Mammary epithelial cell (primary cell): ENCODE measurements at regions of chr9 and their contacts with region 1.

Region 1: GRCh38 chr9:97803167-97804058 is 49.6 kb upstream of the FOXE1 start:
- DNase-seq: peak; percentile 67
- H3K4me3 ChIP-seq: peak overlapping the region; percentile 35 to 57 (median 52)
- H3K27ac ChIP-seq: peak overlapping the region; percentile 27
- H3K4me1 ChIP-seq: peaks cover 49% of the 10 kb centered on the region
- H3K27me3 ChIP-seq: no peaks in the 10 kb centered on the region
- CTCF ChIP-seq: no peak

Region 2: DNA sequence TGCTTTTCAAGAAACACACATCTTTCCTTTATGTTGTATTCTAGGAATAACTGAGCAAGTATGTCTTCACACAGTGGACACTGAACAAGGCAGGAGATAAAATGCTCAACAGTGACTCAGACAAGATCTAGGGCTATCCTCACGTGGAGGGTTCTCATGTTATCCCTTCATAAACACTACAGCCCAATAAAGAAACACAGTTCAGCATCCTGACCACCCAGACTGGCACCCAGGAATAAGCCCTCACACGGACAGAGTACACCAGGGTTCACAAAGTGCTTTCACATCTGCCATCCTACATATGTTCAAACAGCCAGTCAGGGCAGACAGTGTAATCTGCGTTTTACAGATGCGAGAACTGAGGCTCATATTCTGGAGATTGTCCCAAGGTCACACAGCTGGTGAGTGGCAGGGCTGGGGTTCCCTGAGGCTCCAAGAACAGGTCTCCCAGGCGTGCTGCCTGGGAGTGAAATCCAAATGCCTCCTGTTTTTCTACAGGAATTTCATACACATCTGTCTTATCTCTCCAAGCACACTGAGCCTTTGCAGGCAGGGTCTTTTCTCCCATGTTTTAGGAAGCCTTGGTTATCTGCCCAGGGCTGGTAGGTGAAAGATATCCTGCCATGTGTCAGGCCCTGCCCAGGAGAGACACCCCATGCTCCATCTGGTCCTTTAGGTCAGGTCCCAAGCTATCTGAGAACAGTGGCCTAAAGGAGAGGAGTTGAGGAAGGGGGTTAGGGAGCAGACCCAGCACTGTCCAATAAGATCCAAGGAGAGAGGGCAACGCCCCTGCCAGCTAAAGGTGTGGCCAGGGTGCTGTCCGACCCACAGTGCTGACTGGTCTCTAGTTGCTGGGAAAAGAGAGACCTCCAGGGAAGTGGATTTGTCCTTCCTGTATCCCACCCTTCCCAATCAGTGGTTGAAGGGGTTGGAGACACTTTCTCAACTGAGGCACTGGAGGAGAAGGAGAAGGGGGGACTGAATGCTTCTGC is 58.4 kb before region 1 on chr9:
- CTCF ChIA-PET with region 1: no interaction called
- dilution Hi-C with region 1: loop called (anchors 5 kb)
- in situ Hi-C with region 1: no loop called
- intact Hi-C with region 1: no loop called
- DNase-seq: no peak
- H3K4me3 ChIP-seq: no peak overlapping the region
- H3K27ac ChIP-seq: no peak overlapping the region
- H3K4me1 ChIP-seq: peaks cover 11% of the 10 kb centered on the region
- H3K27me3 ChIP-seq: peaks cover 4% of the 10 kb centered on the region
- CTCF ChIP-seq: no peak

Region 3: DNA sequence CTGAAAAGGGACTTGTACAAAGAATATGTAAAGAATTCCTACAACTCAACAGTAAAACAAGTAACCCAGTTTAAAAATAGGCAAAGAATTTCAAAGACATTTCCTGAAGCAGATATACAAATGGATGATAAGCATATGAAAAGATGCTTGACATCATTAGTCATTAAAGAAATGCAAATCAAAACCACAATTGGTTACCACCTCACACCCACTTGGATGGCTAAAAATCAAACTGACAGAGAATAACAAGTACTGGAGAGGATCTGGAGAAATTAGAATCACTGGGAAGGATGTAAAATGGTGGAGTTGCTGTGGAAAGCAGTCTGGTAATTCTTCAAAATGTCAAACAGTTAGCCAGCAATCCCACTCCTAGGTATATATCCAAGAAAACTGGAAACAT is 37.1 kb after region 1 on chr9:
- CTCF ChIA-PET with region 1: no interaction called
- dilution Hi-C with region 1: no loop called
- in situ Hi-C with region 1: no loop called
- intact Hi-C with region 1: loop called (anchors 5 kb)
- DNase-seq: peak; percentile 41
- H3K4me3 ChIP-seq: no peak overlapping the region
- H3K27ac ChIP-seq: no peak overlapping the region
- H3K4me1 ChIP-seq: peaks cover 10% of the 10 kb centered on the region
- H3K27me3 ChIP-seq: no peaks in the 10 kb centered on the region
- CTCF ChIP-seq: no peak

Region 4: DNA sequence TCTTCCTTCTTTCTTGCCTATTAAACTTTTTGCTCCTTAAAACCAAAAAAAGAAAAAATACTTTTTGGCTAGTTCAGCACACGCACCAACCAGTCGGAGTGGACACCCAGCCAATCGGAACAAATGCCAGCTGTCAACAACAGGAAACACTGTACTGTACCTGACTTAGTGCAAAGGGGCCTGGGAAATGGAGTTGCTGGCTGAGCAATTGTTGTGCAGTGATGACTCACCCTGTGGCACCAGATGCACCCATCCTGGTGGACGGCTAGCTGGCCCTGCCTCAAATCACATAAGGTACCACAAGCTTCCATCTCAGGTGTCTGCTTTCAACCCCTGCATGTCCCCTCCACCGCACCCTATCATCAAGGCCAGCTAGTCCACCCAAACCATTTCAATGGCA is 70.5 kb after region 1 on chr9:
- CTCF ChIA-PET with region 1: no interaction called
- dilution Hi-C with region 1: no loop called
- in situ Hi-C with region 1: no loop called
- intact Hi-C with region 1: loop called (anchors 2 kb)
- DNase-seq: peak; percentile 52
- H3K4me3 ChIP-seq: no peak overlapping the region
- H3K27ac ChIP-seq: no peak overlapping the region
- H3K4me1 ChIP-seq: peaks cover 37% of the 10 kb centered on the region
- H3K27me3 ChIP-seq: no peaks in the 10 kb centered on the region
- CTCF ChIP-seq: no peak

Region 5: DNA sequence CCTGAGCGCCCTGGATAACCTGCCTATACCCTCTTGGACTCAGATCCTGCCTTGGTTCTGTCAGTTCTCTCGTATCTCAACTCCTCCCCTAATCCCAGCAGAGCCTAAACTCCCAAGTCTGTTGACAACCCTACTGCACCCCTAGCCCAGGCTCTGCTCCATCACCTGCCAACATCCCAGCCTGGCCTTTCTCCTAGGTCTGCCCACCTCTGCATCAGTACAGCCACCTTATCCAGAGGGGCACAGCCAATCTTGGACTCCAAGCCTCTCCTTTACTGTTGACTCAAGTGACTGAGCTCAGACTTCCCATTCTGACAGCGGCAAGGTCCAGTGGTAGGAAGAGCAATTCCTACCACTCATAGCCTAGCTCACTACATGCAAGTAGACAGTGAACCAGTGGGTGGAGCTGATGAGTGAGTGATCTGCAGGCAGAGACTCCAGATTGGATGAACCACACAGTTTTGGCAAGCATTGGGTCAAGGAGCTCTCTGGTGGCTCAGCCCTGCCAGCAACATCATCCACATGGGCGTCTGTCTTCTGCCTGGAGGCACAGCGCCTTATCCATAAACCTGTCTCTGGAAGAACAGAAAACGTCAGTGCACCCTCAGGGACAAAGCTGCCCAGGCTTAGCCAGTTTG is 92.4 kb after region 1 on chr9:
- CTCF ChIA-PET with region 1: interaction called, 4 read pairs
- dilution Hi-C with region 1: no loop called
- in situ Hi-C with region 1: no loop called
- intact Hi-C with region 1: loop called (anchors 2 kb)
- DNase-seq: peak; percentile 23
- H3K4me3 ChIP-seq: no peak overlapping the region
- H3K27ac ChIP-seq: no peak overlapping the region
- H3K4me1 ChIP-seq: no peaks in the 10 kb centered on the region
- H3K27me3 ChIP-seq: no peaks in the 10 kb centered on the region
- CTCF ChIP-seq: peak; percentile 30 to 42

Region 6: DNA sequence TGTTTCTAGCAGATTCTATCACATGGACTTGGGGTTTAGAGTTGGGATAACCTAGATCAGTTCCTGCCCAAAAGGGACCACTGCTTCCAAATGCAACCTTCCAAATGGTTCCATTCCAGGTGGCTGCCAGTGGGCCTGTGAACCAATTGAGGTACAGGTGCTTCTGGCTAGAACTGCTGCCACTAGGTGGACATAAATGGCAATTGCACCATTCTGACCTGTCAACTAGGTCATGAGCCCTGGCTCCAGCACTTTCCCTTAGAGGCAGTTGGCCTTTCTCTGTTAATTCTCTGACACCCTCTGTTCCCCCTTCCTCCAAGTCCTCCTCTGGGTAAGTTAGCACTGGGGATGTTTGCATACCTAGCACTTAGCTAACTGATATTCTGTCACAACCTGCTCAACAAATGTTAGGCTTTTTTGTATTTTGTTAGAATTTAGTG is 151.2 kb after region 1 on chr9:
- CTCF ChIA-PET with region 1: no interaction called
- dilution Hi-C with region 1: no loop called
- in situ Hi-C with region 1: no loop called
- intact Hi-C with region 1: no loop called
- DNase-seq: peak; percentile 36
- H3K4me3 ChIP-seq: no peak overlapping the region
- H3K27ac ChIP-seq: no peak overlapping the region
- H3K4me1 ChIP-seq: no peaks in the 10 kb centered on the region
- H3K27me3 ChIP-seq: no peaks in the 10 kb centered on the region
- CTCF ChIP-seq: peak; percentile 68 to 82